B cell (primary cell): ENCODE measurements at regions of chr5 and their contacts with region 1.

Region 1: GRCh38 chr5:151239237-151239861 is 13.6 kb upstream of the GM2A start:
- DNase-seq: peak; percentile 66
- ATAC-seq: peak; percentile 64
- H3K4me3 ChIP-seq: peak overlapping the region in 2 of 5 experiments; percentile 7 to 20
- H3K4me3 Mint-ChIP-seq: peak overlapping the region; percentile 84
- H3K27ac ChIP-seq: no peak overlapping the region
- H3K27ac Mint-ChIP-seq: peak overlapping the region; percentile 82
- H3K4me1 ChIP-seq: peaks cover 81 to 82% of the 10 kb centered on the region in 2 donors
- H3K4me1 Mint-ChIP-seq: peaks cover 95% of the 10 kb centered on the region
- H3K27me3 ChIP-seq: no peaks in the 10 kb centered on the region
- H3K27me3 Mint-ChIP-seq: no peaks in the 10 kb centered on the region
- CTCF ChIP-seq: peak; percentile 99

Region 2: GRCh38 chr5:149667084-149667828 is 1572.1 kb before region 1 on chr5:
- CTCF ChIA-PET with region 1: no interaction called
- POLR2A ChIA-PET with region 1: no interaction called
- intact Hi-C with region 1: no loop called
- DNase-seq: peak; percentile 72
- ATAC-seq: peak; percentile 45
- H3K4me3 ChIP-seq: no peak overlapping the region
- H3K4me3 Mint-ChIP-seq: no peak overlapping the region
- H3K27ac ChIP-seq: no peak overlapping the region
- H3K27ac Mint-ChIP-seq: no peak overlapping the region
- H3K4me1 ChIP-seq: peaks cover 0 to 4% of the 10 kb centered on the region in 2 donors
- H3K4me1 Mint-ChIP-seq: peaks cover 3% of the 10 kb centered on the region
- H3K27me3 ChIP-seq: no peaks in the 10 kb centered on the region
- H3K27me3 Mint-ChIP-seq: no peaks in the 10 kb centered on the region
- CTCF ChIP-seq: peak; percentile 87

Region 3: DNA sequence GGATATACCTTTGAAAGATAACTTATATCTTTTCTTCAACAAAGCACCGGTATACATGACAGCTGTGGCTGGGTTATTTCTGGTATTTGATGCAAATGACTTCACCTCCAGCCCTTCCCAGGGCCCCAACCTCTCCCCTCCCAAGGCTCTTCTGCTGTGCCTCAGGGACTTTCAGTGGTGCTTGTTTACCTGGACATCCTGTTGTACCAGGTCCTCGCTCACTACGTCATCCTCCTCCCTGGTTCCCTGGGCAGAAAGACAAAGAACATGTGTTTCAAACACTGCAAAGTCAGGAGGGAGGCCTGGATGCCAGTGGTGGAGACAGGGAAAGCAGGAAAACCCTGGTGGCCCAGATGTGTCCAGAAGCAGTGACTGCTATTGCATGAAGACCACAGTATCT is 105.1 kb before region 1 on chr5:
- CTCF ChIA-PET with region 1: interaction called, 11 read pairs
- POLR2A ChIA-PET with region 1: interaction called, 3 read pairs
- intact Hi-C with region 1: no loop called
- DNase-seq: no peak
- ATAC-seq: peak; percentile 37
- H3K4me3 ChIP-seq: peak overlapping the region in 1 of 5 experiments; percentile 7
- H3K4me3 Mint-ChIP-seq: peak overlapping the region; percentile 62
- H3K27ac ChIP-seq: peak overlapping the region; percentile 48 to 70
- H3K27ac Mint-ChIP-seq: peak overlapping the region; percentile 87
- H3K4me1 ChIP-seq: peaks cover 40 to 76% of the 10 kb centered on the region in 2 donors
- H3K4me1 Mint-ChIP-seq: peaks cover 81% of the 10 kb centered on the region
- H3K27me3 ChIP-seq: no peaks in the 10 kb centered on the region
- H3K27me3 Mint-ChIP-seq: no peaks in the 10 kb centered on the region
- CTCF ChIP-seq: no peak

Region 4: DNA sequence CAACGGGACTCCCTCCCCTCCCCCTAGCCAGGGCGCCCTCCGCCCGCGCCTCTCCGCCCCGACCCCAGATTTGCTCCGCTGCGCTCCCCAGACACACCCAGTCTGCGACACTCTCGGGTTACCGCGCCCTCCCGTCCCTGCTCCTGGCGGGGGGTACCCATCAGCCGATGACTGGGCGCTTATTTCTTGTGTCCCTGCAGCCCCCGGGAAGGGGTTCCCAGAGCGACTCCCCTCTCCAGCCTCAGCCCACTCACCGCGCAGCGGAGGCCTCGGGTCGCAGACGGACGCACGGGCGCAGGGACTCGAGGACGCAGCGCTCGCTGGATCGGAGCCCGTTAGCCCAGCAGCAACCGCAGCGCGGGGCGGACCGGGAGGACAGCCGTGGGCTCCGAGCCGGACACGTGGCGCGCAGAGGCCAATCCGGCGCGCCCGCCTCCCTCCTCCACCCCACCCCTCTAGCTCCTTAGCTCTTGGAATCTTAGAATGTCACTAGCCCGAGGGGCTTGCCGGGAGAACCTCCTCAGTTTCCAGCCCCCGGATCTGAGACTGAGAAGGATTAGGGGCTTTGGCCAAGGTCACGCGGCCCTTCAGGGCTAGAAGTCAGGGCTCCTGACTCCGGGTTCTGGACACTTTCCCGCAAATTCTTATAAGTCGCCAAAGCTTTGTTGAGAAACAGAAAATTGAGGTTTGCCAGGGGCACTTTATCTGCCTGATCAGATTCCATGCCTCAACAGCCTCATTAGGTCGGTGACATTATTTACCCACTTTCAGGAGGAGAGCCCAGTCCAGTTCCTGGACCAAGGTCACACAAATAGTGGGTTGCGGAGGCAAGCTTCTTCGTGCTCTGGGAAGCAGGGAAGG is 81.7 kb before region 1 on chr5 and contains the start of gene ANXA6:
- CTCF ChIA-PET with region 1: interaction called, 265 read pairs
- POLR2A ChIA-PET with region 1: no interaction called
- intact Hi-C with region 1: loop called (anchors 2 kb)
- DNase-seq: peak; percentile 72
- ATAC-seq: peak; percentile 77
- H3K4me3 ChIP-seq: peak within 1 kb of the TSS; percentile 87 to 93 (median 89)
- H3K4me3 Mint-ChIP-seq: peak within 1 kb of the TSS; percentile 97
- H3K27ac ChIP-seq: peak within 1 kb of the TSS; percentile 76 to 91
- H3K27ac Mint-ChIP-seq: peak within 1 kb of the TSS; percentile 97
- H3K4me1 ChIP-seq: peaks cover 63 to 74% of the 10 kb centered on the region in 2 donors
- H3K4me1 Mint-ChIP-seq: peaks cover 73% of the 10 kb centered on the region
- H3K27me3 ChIP-seq: no peaks in the 10 kb centered on the region
- H3K27me3 Mint-ChIP-seq: no peaks in the 10 kb centered on the region
- CTCF ChIP-seq: no peak
- total RNA-seq, gene ANXA6: 300 and 316 TPM in 2 replicates

Region 5: GRCh38 chr5:151183451-151184245 is 55.7 kb before region 1 on chr5:
- CTCF ChIA-PET with region 1: interaction called, 16 read pairs
- POLR2A ChIA-PET with region 1: no interaction called
- intact Hi-C with region 1: no loop called
- DNase-seq: no peak
- ATAC-seq: no peak
- H3K4me3 ChIP-seq: no peak overlapping the region
- H3K4me3 Mint-ChIP-seq: no peak overlapping the region
- H3K27ac ChIP-seq: peak overlapping the region in 1 of 2 donors; percentile 20
- H3K27ac Mint-ChIP-seq: no peak overlapping the region
- H3K4me1 ChIP-seq: peaks cover 12 to 15% of the 10 kb centered on the region in 2 donors
- H3K4me1 Mint-ChIP-seq: peaks cover 38% of the 10 kb centered on the region
- H3K27me3 ChIP-seq: no peaks in the 10 kb centered on the region
- H3K27me3 Mint-ChIP-seq: no peaks in the 10 kb centered on the region
- CTCF ChIP-seq: no peak

Region 6: GRCh38 chr5:151213800-151214613 is 25.3 kb before region 1 on chr5:
- CTCF ChIA-PET with region 1: interaction called, 299 read pairs
- POLR2A ChIA-PET with region 1: interaction called, 29 read pairs
- intact Hi-C with region 1: loop called (anchors 1 kb)
- DNase-seq: peak; percentile 92
- ATAC-seq: peak; percentile 74
- H3K4me3 ChIP-seq: peak overlapping the region; percentile 35 to 58 (median 38)
- H3K4me3 Mint-ChIP-seq: peak overlapping the region; percentile 79
- H3K27ac ChIP-seq: peak overlapping the region; percentile 96 to 99
- H3K27ac Mint-ChIP-seq: peak overlapping the region; percentile 99
- H3K4me1 ChIP-seq: peaks cover 98 to 100% of the 10 kb centered on the region in 2 donors
- H3K4me1 Mint-ChIP-seq: peaks cover 90% of the 10 kb centered on the region
- H3K27me3 ChIP-seq: no peaks in the 10 kb centered on the region
- H3K27me3 Mint-ChIP-seq: no peaks in the 10 kb centered on the region
- CTCF ChIP-seq: no peak

Region 7: GRCh38 chr5:151298063-151298855 is 58.9 kb after region 1 on chr5:
- CTCF ChIA-PET with region 1: no interaction called
- POLR2A ChIA-PET with region 1: no interaction called
- intact Hi-C with region 1: no loop called
- DNase-seq: peak; percentile 56
- ATAC-seq: peak; percentile 51
- H3K4me3 ChIP-seq: no peak overlapping the region
- H3K4me3 Mint-ChIP-seq: no peak overlapping the region
- H3K27ac ChIP-seq: no peak overlapping the region
- H3K27ac Mint-ChIP-seq: no peak overlapping the region
- H3K4me1 ChIP-seq: no peaks in the 10 kb centered on the region
- H3K4me1 Mint-ChIP-seq: peaks cover 2% of the 10 kb centered on the region
- H3K27me3 ChIP-seq: no peaks in the 10 kb centered on the region
- H3K27me3 Mint-ChIP-seq: peaks cover 32% of the 10 kb centered on the region
- CTCF ChIP-seq: peak; percentile 47

Region 8: DNA sequence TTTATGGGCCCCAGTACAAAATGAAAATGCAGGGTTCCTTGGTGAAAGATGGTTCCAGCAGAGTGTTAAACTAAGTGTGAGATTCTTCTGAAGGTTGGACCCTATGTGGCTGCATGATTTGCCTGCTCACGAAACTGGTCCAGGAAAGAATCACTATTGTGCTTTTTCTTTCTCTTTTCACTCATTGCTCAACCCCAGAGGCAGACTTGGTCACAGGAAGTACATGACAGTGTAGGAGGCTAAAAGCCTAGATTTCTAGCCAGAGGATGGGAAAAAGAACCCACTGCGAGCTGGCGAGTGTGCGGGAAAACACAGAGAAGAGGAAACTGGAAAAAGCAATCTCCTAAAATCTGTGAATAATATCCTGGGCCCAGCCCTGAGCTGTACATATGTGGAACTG is 89.4 kb after region 1 on chr5:
- CTCF ChIA-PET with region 1: no interaction called
- POLR2A ChIA-PET with region 1: no interaction called
- intact Hi-C with region 1: no loop called
- DNase-seq: no peak
- ATAC-seq: no peak
- H3K4me3 ChIP-seq: no peak overlapping the region
- H3K4me3 Mint-ChIP-seq: no peak overlapping the region
- H3K27ac ChIP-seq: no peak overlapping the region
- H3K27ac Mint-ChIP-seq: no peak overlapping the region
- H3K4me1 ChIP-seq: no peaks in the 10 kb centered on the region
- H3K4me1 Mint-ChIP-seq: no peaks in the 10 kb centered on the region
- H3K27me3 ChIP-seq: peaks cover 0 to 3% (median 0%) of the 10 kb centered on the region in 4 experiments
- H3K27me3 Mint-ChIP-seq: peaks cover 13% of the 10 kb centered on the region
- CTCF ChIP-seq: no peak